MCF 10A (cell line): ENCODE measurements at regions of chr1 and their contacts with region 1.

Region 1: DNA sequence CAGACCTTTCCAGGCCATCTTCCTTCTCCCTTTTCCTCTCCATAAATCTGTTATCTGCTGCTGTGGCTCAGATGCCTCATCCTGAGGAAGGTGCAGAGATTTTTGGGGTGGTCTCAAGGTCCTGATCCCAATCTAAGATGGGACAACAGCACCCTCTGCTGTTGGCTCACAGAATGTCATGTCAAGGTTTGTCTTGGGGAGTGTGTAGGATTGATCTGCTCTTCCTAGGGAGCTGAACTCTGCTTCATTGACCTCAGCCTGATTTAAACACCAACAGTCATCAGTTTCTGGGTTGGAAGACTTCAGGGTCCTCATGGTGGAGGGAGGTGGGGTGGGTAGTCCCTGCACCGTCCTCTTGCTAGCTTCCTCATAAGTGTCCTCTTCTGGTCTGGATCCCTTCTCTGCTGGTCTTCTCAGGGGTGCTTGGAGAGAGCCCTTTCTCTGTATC is 62.8 kb upstream of the LAX1 start:
- DNase-seq: peak; percentile 83
- H3K4me3 Mint-ChIP-seq: no peak overlapping the region
- H3K27ac Mint-ChIP-seq: no peak overlapping the region
- H3K4me1 Mint-ChIP-seq: peaks cover 16% of the 10 kb centered on the region
- H3K27me3 Mint-ChIP-seq: no peaks in the 10 kb centered on the region
- CTCF ChIP-seq: peak; percentile 100

Region 2: GRCh38 chr1:203486618-203487370 is 215.4 kb before region 1 on chr1:
- CTCF ChIA-PET with region 1: interaction called, 34 read pairs
- POLR2A ChIA-PET with region 1: no interaction called
- intact Hi-C with region 1: no loop called
- DNase-seq: no peak
- H3K4me3 Mint-ChIP-seq: peak overlapping the region; percentile 66
- H3K27ac Mint-ChIP-seq: peak overlapping the region; percentile 26
- H3K4me1 Mint-ChIP-seq: peaks cover 6% of the 10 kb centered on the region
- H3K27me3 Mint-ChIP-seq: peaks cover 7% of the 10 kb centered on the region
- CTCF ChIP-seq: no peak

Region 3: DNA sequence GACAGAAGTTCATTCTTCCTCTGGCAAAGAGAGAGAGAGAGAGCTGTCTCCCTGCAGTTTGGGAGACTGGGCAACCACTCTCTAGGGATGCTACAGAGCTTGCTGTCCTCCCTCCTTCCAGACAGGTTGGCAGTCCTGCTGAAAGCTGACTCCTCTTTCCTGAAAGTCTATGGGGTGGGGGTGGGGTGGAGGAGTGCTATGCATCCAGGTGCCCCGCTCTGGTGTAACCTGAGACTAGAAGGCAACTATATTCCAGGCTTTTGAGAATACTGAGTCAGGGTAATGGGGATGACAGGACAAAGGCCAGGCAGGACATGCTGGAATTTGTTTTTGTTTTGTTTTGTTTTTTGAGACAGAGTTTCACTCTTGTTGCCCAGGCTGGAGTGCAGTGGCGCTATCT is 152.8 kb before region 1 on chr1:
- CTCF ChIA-PET with region 1: interaction called, 20 read pairs
- POLR2A ChIA-PET with region 1: no interaction called
- intact Hi-C with region 1: no loop called
- DNase-seq: peak; percentile 87
- H3K4me3 Mint-ChIP-seq: no peak overlapping the region
- H3K27ac Mint-ChIP-seq: no peak overlapping the region
- H3K4me1 Mint-ChIP-seq: peaks cover 11% of the 10 kb centered on the region
- H3K27me3 Mint-ChIP-seq: no peaks in the 10 kb centered on the region
- CTCF ChIP-seq: no peak

Region 4: DNA sequence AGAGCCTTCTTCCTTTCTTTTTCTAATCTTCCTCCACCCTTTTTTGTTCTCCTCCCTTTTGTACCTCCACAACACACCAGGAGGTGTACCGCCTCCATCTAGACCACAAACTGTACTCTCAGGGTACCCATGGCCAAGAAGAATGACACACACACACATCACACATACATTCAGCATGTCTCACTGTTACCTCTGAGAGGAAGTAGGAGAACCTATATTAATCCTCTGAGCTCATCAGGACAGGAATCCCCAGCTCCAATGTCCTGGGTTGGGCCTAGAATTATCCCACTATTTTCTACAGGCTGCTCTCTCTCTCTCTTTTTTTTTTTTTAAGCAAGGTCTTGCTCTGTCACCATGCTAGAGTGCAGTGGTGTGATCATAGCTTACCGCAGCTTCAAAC is 38.9 kb before region 1 on chr1:
- CTCF ChIA-PET with region 1: interaction called, 12 read pairs
- POLR2A ChIA-PET with region 1: interaction called, 5 read pairs
- intact Hi-C with region 1: loop called (anchors 2 kb)
- DNase-seq: peak; percentile 98
- H3K4me3 Mint-ChIP-seq: peak overlapping the region; percentile 3
- H3K27ac Mint-ChIP-seq: peak overlapping the region; percentile 58
- H3K4me1 Mint-ChIP-seq: peaks cover 34% of the 10 kb centered on the region
- H3K27me3 Mint-ChIP-seq: no peaks in the 10 kb centered on the region
- CTCF ChIP-seq: no peak

Region 5: GRCh38 chr1:203733009-203733863 is 31.1 kb after region 1 on chr1:
- CTCF ChIA-PET with region 1: interaction called, 13 read pairs
- POLR2A ChIA-PET with region 1: no interaction called
- intact Hi-C with region 1: no loop called
- DNase-seq: no peak
- H3K4me3 Mint-ChIP-seq: no peak overlapping the region
- H3K27ac Mint-ChIP-seq: no peak overlapping the region
- H3K4me1 Mint-ChIP-seq: no peaks in the 10 kb centered on the region
- H3K27me3 Mint-ChIP-seq: no peaks in the 10 kb centered on the region
- CTCF ChIP-seq: no peak

Region 6: GRCh38 chr1:204128964-204129896 is 427.1 kb after region 1 on chr1:
- CTCF ChIA-PET with region 1: no interaction called
- POLR2A ChIA-PET with region 1: no interaction called
- intact Hi-C with region 1: loop called (anchors 10 kb)
- DNase-seq: peak; percentile 86
- H3K4me3 Mint-ChIP-seq: peak overlapping the region; percentile 68
- H3K27ac Mint-ChIP-seq: peak overlapping the region; percentile 63
- H3K4me1 Mint-ChIP-seq: peaks cover 58% of the 10 kb centered on the region
- H3K27me3 Mint-ChIP-seq: no peaks in the 10 kb centered on the region
- CTCF ChIP-seq: peak; percentile 100